Activated naive CD4-positive, alpha-beta T cell treated with anti-CD3 and anti-CD28 coated beads, Interleukin-2, amount 10 ng/mL, durations not matched to agents 7 days and 5 days (primary cell): ENCODE measurements at regions of chr14 and their contacts with region 1.

Region 1: DNA sequence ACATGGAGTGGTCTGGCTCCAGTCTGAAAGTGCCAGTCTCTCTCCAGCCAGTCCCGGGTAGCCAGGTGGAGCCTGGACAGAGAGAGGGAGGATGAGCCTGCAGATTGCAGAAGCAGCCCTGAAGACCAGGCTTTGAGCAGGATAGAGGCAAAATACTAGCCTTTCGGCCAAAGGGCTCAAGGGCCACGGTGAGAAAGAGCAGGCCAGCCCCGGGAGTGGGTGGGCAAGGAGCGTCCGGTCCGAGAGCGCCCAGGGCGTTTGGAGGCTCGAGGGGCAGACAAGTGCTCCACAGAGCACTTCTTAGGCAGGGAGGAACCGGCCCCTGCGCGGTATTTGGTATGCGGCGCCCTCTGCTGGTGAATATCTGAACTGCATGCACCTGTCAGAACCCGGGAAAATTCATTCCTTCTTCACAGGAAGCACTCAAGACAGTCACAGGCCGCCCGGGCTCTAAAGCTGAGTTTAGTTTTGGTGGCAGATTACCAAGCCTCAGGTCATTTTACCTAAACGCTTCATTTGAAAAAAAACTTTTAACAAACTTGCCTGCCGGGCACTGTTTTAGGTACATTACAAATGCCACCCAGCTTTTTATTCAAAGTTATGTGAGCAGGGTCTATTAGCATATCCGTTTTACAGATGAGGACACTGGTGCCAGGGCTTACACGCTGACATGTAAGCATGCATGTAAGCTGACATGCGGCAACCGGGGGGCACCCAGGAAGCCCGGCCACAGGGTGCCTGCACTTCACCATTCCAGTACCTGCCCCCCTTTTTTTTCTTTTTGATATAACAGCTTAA is 21.0 kb upstream of the PSMC1 start:
- DNase-seq: peak; percentile 78
- H3K4me3 Mint-ChIP-seq: no peak overlapping the region
- H3K27ac Mint-ChIP-seq: no peak overlapping the region
- H3K4me1 Mint-ChIP-seq: peaks cover 3% of the 10 kb centered on the region
- H3K27me3 Mint-ChIP-seq: peaks cover 24% of the 10 kb centered on the region

Region 2: GRCh38 chr14:89941830-89942377 is 293.5 kb before region 1 on chr14:
- CTCF ChIA-PET with region 1: interaction called, 42 read pairs
- DNase-seq: no peak
- H3K4me3 Mint-ChIP-seq: no peak overlapping the region
- H3K27ac Mint-ChIP-seq: no peak overlapping the region
- H3K4me1 Mint-ChIP-seq: no peaks in the 10 kb centered on the region
- H3K27me3 Mint-ChIP-seq: peaks cover 3% of the 10 kb centered on the region